Tibial artery (tissue), 4 donors: ENCODE measurements at regions of chr6 and their contacts with region 1.

Region 1: DNA sequence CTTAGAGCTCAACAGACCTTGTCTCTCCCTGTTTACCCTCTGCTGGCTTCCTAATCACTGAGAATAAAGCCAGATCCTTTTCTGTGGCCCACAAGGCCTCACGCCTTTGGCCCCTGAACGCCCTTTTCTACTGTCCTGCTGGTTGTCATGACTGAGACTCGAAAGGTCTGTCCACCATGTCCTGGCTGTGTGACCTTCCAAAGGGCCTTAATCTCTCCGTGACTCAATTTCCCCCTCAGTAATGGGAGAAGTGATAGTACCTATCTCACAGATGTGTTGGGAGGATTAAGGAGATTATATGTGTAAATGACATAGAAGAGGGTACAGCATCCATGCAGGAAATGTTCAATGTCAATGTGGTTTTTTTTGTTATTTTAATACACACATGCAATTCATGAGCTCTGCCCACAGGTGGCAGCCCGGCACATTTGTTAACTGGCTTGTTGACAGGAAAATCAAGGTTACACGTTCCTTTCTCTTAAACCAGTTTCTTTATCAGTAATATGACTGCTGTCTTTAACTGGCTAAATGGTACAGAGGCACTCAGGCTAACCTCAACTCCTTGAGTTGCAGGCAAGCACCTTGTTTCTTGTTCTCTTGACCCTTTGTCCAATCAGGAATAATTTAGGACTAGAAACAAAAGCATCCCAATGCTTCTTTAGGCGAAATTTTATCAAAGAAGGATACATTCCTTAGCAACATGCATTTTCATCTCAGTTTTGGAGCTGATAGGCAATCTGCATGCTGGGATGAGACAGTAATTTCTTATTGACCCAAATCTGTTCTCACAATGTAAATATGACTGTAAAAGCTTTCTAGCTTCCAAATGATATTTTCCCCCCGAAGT is 16.6 kb downstream of the SLC22A1 start:
- DNase-seq: peak; percentile 44 to 74
- H3K4me3 ChIP-seq: no peak overlapping the region
- H3K27ac ChIP-seq: peak overlapping the region; percentile 87 to 95
- H3K4me1 ChIP-seq: peaks cover 0 to 51% (median 31%) of the 10 kb centered on the region in 4 donors
- H3K27me3 ChIP-seq: no peaks in the 10 kb centered on the region
- CTCF ChIP-seq: peak; percentile 74 to 82

Region 2: DNA sequence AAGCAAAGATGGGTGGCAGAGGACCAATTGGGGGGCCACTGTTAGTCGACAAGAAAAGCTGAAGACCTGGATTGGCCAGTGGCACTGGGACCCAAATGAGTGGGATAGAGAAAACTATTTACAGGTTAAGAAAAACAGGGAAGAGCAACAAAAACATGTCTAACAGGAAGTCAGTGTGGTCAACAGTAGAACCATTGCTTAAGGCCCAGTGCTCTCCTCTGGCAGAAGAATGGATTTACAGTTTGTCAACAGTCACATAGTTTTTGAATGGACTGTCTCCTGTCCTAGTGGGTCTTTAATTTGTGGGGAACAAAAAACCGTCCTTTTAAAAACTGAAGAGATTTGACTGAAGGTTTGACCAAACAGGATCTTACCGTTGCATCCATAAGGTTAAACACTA is 423.0 kb before region 1 on chr6:
- intact Hi-C with region 1: no loop called
- DNase-seq: no peak
- H3K4me3 ChIP-seq: no peak overlapping the region
- H3K27ac ChIP-seq: peak overlapping the region; percentile 75 to 81
- H3K4me1 ChIP-seq: peaks cover 0 to 38% (median 29%) of the 10 kb centered on the region in 4 donors
- H3K27me3 ChIP-seq: no peaks in the 10 kb centered on the region
- CTCF ChIP-seq: no peak

Region 3: DNA sequence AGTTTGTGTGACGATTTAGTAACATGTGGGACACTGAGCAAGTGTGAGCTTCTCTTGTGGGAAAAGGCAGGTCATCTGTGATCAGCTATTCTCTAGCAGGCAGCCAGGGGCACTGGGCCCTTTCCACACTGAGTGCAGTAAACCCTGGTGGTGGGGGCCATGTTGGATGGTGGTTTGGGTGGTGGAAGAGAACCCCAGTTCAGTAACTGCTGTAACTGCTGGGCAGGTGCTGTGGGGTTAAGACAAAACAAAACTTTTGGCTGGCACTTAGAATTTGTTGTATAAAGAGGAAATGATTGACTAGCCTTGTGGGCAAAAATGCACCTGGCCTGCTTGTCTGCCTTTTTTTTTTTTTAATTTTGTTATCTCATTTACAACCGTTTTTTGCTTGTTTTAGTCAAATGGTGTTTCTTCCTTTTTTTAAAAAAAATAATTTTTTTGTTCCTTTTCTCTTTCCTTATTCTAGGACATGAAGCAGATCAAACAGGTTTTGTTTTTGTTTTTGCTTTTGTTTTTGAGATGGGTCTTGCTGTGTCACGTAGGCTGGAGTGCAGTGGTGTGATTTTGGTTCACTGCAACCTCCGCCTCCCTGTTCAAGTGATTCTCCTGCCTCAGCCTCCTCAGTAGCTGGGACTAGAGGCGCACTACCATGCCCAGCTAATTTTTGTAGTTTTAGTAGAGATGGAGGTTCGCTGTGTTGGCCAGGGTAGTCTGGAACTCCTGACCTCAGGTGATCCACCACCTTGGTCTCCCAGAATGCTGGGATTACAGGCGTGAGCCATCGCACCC is 109.5 kb before region 1 on chr6:
- intact Hi-C with region 1: no loop called
- DNase-seq: no peak
- H3K4me3 ChIP-seq: no peak overlapping the region
- H3K27ac ChIP-seq: peak overlapping the region in 1 of 2 donors; percentile 56
- H3K4me1 ChIP-seq: peaks cover 0 to 19% (median 13%) of the 10 kb centered on the region in 4 donors
- H3K27me3 ChIP-seq: no peaks in the 10 kb centered on the region
- CTCF ChIP-seq: no peak

Region 4: GRCh38 chr6:160051390-160051789 is 86.8 kb before region 1 on chr6:
- intact Hi-C with region 1: no loop called
- DNase-seq: no peak
- H3K4me3 ChIP-seq: no peak overlapping the region
- H3K27ac ChIP-seq: no peak overlapping the region
- H3K4me1 ChIP-seq: no peaks in the 10 kb centered on the region
- H3K27me3 ChIP-seq: no peaks in the 10 kb centered on the region
- CTCF ChIP-seq: no peak

Region 5: DNA sequence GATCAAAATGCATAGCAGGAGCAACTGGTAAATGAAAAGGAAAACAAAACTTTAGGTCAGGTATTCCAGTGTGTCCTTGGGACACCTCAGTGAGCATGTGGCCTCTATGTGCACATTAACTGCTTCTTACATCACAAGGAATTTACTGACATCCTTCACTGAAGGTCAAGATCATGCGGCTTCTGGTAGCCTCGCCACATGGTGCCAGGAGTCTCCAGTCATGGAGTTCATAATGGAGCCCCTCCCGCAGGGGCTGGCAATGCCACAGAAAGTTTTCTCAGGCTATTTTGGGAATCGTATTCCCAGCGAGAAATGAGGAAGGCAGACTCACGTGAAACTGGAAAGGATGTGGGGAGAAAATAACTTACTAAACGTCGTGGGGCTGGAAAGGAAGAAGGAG is 190.2 kb after region 1 on chr6:
- intact Hi-C with region 1: loop called (anchors 10 kb)
- DNase-seq: peak; percentile 67 to 92
- H3K4me3 ChIP-seq: no peak overlapping the region
- H3K27ac ChIP-seq: peak overlapping the region; percentile 76 to 82
- H3K4me1 ChIP-seq: peaks cover 0 to 55% (median 35%) of the 10 kb centered on the region in 4 donors
- H3K27me3 ChIP-seq: no peaks in the 10 kb centered on the region
- CTCF ChIP-seq: no peak

Region 6: DNA sequence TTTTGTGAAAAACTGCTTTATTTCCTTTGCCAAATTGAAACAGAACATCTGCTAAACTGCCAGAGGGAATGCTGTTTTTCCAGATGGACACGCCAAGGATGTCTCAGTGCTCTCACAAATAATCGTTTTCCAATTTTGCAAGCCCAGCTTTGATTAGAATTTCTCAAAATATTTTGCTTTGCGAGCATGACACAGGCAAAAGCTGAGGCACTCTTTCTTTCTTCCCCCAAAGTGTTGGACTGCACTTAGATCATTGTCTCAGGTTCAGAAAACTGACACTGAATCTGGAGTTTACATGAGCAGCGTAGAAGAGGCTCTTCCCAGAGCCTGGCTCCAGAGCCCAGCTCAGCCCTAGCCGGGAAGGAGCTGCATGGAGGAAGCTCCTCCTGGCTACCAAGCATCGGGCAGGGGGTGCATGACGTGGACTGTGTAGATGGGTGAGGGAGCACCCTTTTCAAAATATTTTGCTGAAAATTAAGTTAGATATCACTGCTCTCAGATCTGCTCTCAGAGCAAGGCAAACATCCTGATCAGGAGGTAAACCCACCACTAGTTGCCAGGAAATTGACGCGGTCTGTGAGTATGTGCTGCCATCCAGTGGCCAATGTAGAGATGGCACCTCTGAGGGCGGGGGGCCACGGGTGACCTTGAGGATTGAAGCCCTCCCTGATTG is 317.5 kb after region 1 on chr6:
- intact Hi-C with region 1: loop called (anchors 2 kb)
- DNase-seq: peak; percentile 40 to 83
- H3K4me3 ChIP-seq: peak overlapping the region; percentile 15 to 23
- H3K27ac ChIP-seq: peak overlapping the region; percentile 30 to 60
- H3K4me1 ChIP-seq: peaks cover 0 to 10% (median 6%) of the 10 kb centered on the region in 4 donors
- H3K27me3 ChIP-seq: no peaks in the 10 kb centered on the region
- CTCF ChIP-seq: peak; percentile 94 to 98